MCF 10A (cell line): ENCODE measurements at regions of chr18 and their contacts with region 1.

Region 1: DNA sequence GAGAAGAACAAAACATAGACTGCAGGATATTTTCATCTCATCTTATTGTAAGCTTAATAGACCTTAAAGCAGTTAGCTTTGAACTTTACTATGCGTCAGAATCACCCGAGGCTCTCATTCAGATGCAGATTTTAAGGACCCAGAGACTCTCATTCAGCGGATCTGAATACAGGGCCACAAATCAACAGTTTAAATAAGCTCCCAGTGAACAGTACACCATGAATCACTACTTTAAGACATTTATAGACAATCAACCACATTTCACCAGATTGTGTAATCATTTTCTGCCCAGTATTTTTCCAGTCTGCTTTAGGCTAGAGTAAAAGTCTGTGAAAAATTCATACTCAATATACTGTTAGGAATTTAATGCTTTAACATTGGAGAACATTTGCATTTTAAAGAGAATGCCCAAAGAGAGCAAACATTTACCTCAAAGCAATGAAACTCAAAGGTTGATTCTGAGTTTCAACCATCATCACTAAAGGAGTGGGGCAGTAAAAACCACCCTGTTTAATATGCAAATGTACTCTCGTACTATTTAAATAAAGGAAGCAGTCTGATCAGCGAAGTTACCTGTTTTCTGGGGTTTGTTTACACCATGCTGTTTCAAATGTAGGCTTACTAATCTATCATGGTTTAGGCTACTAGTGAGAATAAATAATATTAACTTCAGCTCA is 11.0 kb upstream of the ALPK2 start:
- DNase-seq: peak; percentile 81
- H3K4me3 Mint-ChIP-seq: peak overlapping the region; percentile 10
- H3K27ac Mint-ChIP-seq: no peak overlapping the region
- H3K4me1 Mint-ChIP-seq: peaks cover 10% of the 10 kb centered on the region
- H3K27me3 Mint-ChIP-seq: no peaks in the 10 kb centered on the region
- CTCF ChIP-seq: no peak

Region 2: GRCh38 chr18:58584200-58585127 is 55.4 kb before region 1 on chr18:
- CTCF ChIA-PET with region 1: no interaction called
- POLR2A ChIA-PET with region 1: interaction called, 5 read pairs
- intact Hi-C with region 1: loop called (anchors 5 kb)
- DNase-seq: peak; percentile 42
- H3K4me3 Mint-ChIP-seq: no peak overlapping the region
- H3K27ac Mint-ChIP-seq: no peak overlapping the region
- H3K4me1 Mint-ChIP-seq: peaks cover 14% of the 10 kb centered on the region
- H3K27me3 Mint-ChIP-seq: no peaks in the 10 kb centered on the region
- CTCF ChIP-seq: no peak

Region 3: GRCh38 chr18:58611471-58612131 is 28.3 kb before region 1 on chr18:
- CTCF ChIA-PET with region 1: interaction called, 5 read pairs
- POLR2A ChIA-PET with region 1: interaction called, 22 read pairs
- intact Hi-C with region 1: no loop called
- DNase-seq: peak; percentile 55
- H3K4me3 Mint-ChIP-seq: peak overlapping the region; percentile 39
- H3K27ac Mint-ChIP-seq: peak overlapping the region; percentile 57
- H3K4me1 Mint-ChIP-seq: peaks cover 18% of the 10 kb centered on the region
- H3K27me3 Mint-ChIP-seq: no peaks in the 10 kb centered on the region
- CTCF ChIP-seq: no peak